ENCODE measurements at regions of chr19 and their contacts with region 1.

Region 1: DNA sequence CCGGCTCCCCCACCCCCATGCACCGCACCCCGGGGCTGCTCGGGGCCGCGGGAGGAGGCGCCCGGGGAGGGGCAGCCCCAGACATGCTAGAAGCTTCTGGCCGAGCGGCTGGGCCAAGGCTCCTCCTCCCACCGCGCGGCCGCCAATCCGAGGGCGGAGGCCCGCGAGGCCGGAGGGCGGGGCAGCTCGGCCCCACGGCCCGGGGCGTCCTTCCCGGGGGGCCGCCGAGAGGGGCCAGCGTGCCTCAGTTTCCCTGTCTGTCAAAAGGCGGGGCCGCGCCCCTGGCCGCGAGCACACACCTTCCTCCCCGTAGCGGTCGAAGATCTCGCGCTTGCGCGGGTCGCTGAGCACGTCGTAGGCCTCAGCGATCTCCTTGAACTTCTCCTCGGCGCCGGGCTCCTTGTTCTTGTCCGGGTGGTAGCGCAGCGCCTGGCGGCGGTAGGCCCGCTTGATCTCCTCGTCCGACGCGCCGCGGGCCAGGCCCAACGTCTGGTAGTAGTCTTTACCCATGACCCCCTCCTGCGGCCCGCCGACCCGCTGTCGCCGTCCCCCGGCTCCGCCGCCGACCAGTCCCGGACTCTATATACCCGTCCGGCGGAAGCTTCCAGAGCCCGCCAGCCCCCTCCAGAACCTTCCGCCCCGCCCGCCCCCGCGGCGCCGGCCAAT is at the start of gene DNAJB1:
- DNase-seq: peak; percentile 85
- H3K4me3 Mint-ChIP-seq: peak within 1 kb of the TSS; percentile 87
- H3K27ac Mint-ChIP-seq: peak within 1 kb of the TSS; percentile 97
- H3K4me1 Mint-ChIP-seq: peaks cover 23% of the 10 kb centered on the region
- H3K27me3 Mint-ChIP-seq: no peaks in the 10 kb centered on the region
- CTCF ChIP-seq: no peak
- total RNA-seq, gene DNAJB1: 71.6 and 97.4 TPM in 2 replicates

Region 2: DNA sequence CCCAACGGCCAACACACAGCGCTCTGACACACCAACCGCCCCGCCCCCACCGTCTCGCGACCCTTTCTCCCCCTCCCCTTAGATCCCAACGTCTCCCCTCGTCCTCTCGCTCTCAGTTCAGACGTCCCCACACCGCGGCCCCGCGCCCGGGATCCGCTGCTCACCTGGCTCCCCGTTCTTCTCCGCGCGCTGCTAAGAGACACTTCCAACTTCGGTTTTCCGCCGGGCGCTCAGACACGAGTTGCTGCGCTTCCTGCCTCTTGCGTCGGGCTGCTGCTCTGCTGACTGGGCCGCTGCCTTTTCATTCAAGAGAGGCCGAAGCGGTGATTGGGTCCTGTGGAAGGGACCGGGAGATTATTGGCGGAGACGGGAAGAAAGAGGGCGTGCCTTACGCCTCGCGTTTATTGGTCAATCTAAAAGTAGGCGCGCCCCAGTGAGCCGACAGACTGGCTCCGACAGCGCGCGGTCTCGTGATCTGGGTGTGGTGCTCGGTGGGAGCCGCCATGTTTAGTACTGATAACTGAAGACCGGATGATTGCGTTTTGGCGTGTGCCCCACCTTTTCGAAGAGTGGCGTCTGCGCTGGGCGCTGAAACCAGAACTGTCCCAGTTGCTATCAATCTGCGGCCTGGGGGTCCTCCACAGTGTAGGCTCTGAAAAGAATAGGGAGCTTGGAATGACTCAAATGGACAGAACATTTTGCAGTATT is 98.7 kb before region 1 on chr19 and contains the start of gene DDX39A:
- CTCF ChIA-PET with region 1: no interaction called
- POLR2A ChIA-PET with region 1: interaction called, 12 read pairs
- intact Hi-C with region 1: no loop called
- DNase-seq: peak; percentile 100
- H3K4me3 Mint-ChIP-seq: peak within 1 kb of the TSS; percentile 79
- H3K27ac Mint-ChIP-seq: peak within 1 kb of the TSS; percentile 88
- H3K4me1 Mint-ChIP-seq: peaks cover 23% of the 10 kb centered on the region
- H3K27me3 Mint-ChIP-seq: no peaks in the 10 kb centered on the region
- CTCF ChIP-seq: no peak
- total RNA-seq, gene DDX39A: 62.1 and 65.4 TPM in 2 replicates

Region 3: DNA sequence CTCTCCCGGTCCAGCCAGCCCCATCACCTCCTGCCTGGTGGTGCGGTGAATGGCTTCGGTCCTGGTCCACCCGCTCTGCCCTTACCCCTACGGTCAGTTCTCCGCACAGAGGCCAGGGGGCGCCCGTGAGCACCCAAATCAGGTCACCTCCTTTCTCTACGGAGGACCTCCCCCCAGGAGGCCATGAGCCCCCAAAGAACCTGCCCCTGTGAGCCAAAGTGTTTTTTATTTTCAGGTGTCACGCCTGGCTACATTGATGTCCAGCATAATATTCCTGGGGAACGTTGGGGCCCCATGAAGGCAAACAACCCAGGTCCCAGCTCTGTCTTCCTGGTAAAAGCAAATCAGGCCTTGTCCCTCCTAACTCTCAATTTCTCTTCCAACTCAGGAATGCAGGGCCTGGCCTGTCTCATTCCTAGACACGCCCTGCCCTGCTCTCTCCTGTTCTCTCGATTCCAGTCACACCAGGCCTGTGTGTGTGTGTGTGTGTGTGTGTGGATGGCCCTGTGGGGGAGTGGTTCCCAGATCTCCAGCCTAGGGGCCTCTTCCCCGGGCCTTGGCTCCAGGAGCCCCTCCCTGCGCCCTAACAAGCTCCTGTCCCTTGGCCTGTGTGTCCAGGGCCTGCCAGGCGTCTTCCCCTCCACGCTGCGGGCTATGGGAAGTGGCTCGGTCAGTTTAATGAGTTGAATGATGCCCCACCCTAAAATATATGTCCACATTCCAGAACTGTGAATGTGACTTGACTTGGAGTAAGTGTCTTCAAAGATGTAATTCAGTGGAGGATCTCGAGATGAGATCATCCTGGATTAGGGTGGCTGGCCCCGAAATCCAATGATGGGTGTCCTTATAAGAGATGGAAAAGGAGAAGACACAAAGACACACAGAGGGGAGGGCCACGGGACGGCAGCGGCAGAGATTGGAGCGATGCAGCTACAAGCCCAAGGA is 12.2 kb before region 1 on chr19:
- CTCF ChIA-PET with region 1: interaction called, 53 read pairs
- POLR2A ChIA-PET with region 1: interaction called, 153 read pairs
- intact Hi-C with region 1: no loop called
- DNase-seq: peak; percentile 89
- H3K4me3 Mint-ChIP-seq: peak overlapping the region; percentile 65
- H3K27ac Mint-ChIP-seq: peak overlapping the region; percentile 96
- H3K4me1 Mint-ChIP-seq: peaks cover 33% of the 10 kb centered on the region
- H3K27me3 Mint-ChIP-seq: no peaks in the 10 kb centered on the region
- CTCF ChIP-seq: peak; percentile 85

Region 4: GRCh38 chr19:14536926-14537692 is 19.1 kb after region 1 on chr19:
- CTCF ChIA-PET with region 1: interaction called, 3 read pairs
- POLR2A ChIA-PET with region 1: interaction called, 12 read pairs
- intact Hi-C with region 1: no loop called
- DNase-seq: peak; percentile 93
- H3K4me3 Mint-ChIP-seq: peak overlapping the region; percentile 33
- H3K27ac Mint-ChIP-seq: no peak overlapping the region
- H3K4me1 Mint-ChIP-seq: no peaks in the 10 kb centered on the region
- H3K27me3 Mint-ChIP-seq: no peaks in the 10 kb centered on the region
- CTCF ChIP-seq: no peak

Region 5: DNA sequence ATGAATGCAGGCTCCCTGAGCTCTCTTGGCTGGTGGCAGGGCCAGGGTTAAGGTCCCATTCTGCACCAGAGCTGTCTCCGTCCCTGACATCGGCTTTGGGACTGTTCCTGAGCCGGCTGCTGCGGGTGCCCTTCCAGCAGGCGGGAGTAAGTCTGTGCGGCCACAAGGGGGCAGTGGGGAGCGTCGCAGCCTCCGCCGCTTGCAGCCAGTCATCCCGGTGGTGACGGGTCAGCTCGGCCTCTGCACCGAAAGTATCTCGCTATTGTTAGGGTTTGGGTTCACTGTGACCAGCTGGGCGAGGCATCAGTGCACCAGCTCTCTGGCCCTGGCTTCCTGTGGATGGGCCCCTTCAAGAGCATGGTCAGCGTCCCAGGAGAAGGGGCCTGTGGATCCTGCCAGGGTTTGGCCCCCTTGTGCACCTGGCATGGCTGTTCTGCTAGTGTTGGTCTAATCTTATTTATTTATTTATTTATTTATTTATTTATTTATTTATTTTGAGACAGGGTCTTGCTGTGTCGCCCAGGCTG is 38.8 kb after region 1 on chr19:
- CTCF ChIA-PET with region 1: interaction called, 7 read pairs
- POLR2A ChIA-PET with region 1: interaction called, 40 read pairs
- intact Hi-C with region 1: loop called (anchors 2 kb)
- DNase-seq: peak; percentile 81
- H3K4me3 Mint-ChIP-seq: peak overlapping the region; percentile 45
- H3K27ac Mint-ChIP-seq: peak overlapping the region; percentile 88
- H3K4me1 Mint-ChIP-seq: peaks cover 34% of the 10 kb centered on the region
- H3K27me3 Mint-ChIP-seq: no peaks in the 10 kb centered on the region
- CTCF ChIP-seq: peak; percentile 93

Region 6: DNA sequence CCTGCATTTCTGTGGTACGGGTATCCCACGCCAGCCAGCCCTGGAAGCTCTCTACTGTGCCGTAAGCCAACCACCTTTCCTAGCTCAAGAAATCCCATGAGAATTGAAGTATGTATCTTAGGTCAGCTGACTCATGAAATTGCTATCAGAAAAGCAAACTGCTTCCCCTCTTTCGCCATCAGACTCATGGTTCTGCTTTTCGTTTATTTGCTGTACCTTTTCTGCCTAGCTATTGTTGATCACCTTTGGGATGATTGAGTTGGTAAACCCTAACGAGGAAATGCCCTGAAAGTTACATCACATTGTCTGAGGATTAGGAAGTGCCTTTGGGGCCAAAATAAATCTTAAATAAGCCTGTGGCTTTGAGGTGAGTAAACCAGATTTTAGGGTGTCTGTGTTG is 156.8 kb after region 1 on chr19 and contains the start of gene ADGRE3:
- CTCF ChIA-PET with region 1: no interaction called
- POLR2A ChIA-PET with region 1: no interaction called
- intact Hi-C with region 1: no loop called
- DNase-seq: no peak
- H3K4me3 Mint-ChIP-seq: no peak within 1 kb of the TSS
- H3K27ac Mint-ChIP-seq: no peak within 1 kb of the TSS
- H3K4me1 Mint-ChIP-seq: no peaks in the 10 kb centered on the region
- H3K27me3 Mint-ChIP-seq: no peaks in the 10 kb centered on the region
- CTCF ChIP-seq: no peak
- total RNA-seq, gene ADGRE3: not detected in 2 replicates

Measured in MCF 10A (cell line).